ENCODE measurements at regions of chr2 and their contacts with region 1.

Region 1: GRCh38 chr2:176096986-176097819 is 2.4 kb upstream of the HOXD12 start:
- DNase-seq: peak; percentile 42
- ATAC-seq: peak; percentile 68
- H3K4me3 Mint-ChIP-seq: peak overlapping the region; percentile 76
- H3K27ac Mint-ChIP-seq: no peak overlapping the region
- H3K4me1 Mint-ChIP-seq: peaks cover 19% of the 10 kb centered on the region
- H3K27me3 Mint-ChIP-seq: peaks cover 77% of the 10 kb centered on the region
- CTCF ChIP-seq: no peak

Region 2: GRCh38 chr2:175030380-175031271 is 1066.6 kb before region 1 on chr2:
- CTCF ChIA-PET with region 1: no interaction called
- POLR2A ChIA-PET with region 1: no interaction called
- intact Hi-C with region 1: loop called (anchors 10 kb)
- DNase-seq: no peak
- ATAC-seq: no peak
- H3K4me3 Mint-ChIP-seq: no peak overlapping the region
- H3K27ac Mint-ChIP-seq: no peak overlapping the region
- H3K4me1 Mint-ChIP-seq: no peaks in the 10 kb centered on the region
- H3K27me3 Mint-ChIP-seq: no peaks in the 10 kb centered on the region
- CTCF ChIP-seq: no peak

Region 3: GRCh38 chr2:175203621-175204496 is 893.3 kb before region 1 on chr2:
- CTCF ChIA-PET with region 1: interaction called, 3 read pairs
- POLR2A ChIA-PET with region 1: no interaction called
- intact Hi-C with region 1: loop called (anchors 2 kb)
- DNase-seq: no peak
- ATAC-seq: peak; percentile 79
- H3K4me3 Mint-ChIP-seq: no peak overlapping the region
- H3K27ac Mint-ChIP-seq: no peak overlapping the region
- H3K4me1 Mint-ChIP-seq: no peaks in the 10 kb centered on the region
- H3K27me3 Mint-ChIP-seq: peaks cover 25% of the 10 kb centered on the region
- CTCF ChIP-seq: no peak

Region 4: GRCh38 chr2:175251425-175252041 is 845.7 kb before region 1 on chr2:
- CTCF ChIA-PET with region 1: interaction called, 16 read pairs
- POLR2A ChIA-PET with region 1: no interaction called
- intact Hi-C with region 1: no loop called
- DNase-seq: no peak
- ATAC-seq: no peak
- H3K4me3 Mint-ChIP-seq: no peak overlapping the region
- H3K27ac Mint-ChIP-seq: no peak overlapping the region
- H3K4me1 Mint-ChIP-seq: no peaks in the 10 kb centered on the region
- H3K27me3 Mint-ChIP-seq: peaks cover 17% of the 10 kb centered on the region
- CTCF ChIP-seq: peak; percentile 51

Region 5: DNA sequence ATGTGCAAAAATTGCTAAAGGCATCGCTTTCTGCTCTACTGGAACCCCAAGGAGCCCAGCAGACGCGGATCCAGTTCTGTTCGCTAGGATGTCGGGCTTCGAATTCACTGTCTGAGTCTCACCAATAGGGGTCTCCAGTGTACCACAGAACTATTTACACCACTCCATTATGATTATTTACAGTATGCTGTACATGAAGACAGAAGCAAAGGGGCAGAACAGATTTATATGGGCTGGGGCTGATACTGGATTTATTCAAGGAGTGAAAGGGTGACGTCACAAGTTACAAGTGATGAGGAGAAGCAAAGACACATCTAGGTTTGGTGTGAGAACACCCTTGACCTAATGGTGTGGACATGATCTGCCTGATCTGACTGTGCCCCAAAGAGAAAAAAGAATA is 730.4 kb before region 1 on chr2:
- CTCF ChIA-PET with region 1: no interaction called
- POLR2A ChIA-PET with region 1: no interaction called
- intact Hi-C with region 1: loop called (anchors 1 kb)
- DNase-seq: no peak
- ATAC-seq: no peak
- H3K4me3 Mint-ChIP-seq: no peak overlapping the region
- H3K27ac Mint-ChIP-seq: no peak overlapping the region
- H3K4me1 Mint-ChIP-seq: no peaks in the 10 kb centered on the region
- H3K27me3 Mint-ChIP-seq: peaks cover 9% of the 10 kb centered on the region
- CTCF ChIP-seq: peak; percentile 57

Region 6: GRCh38 chr2:175690113-175690837 is 406.9 kb before region 1 on chr2:
- CTCF ChIA-PET with region 1: interaction called, 53 read pairs
- POLR2A ChIA-PET with region 1: no interaction called
- intact Hi-C with region 1: no loop called
- DNase-seq: no peak
- ATAC-seq: no peak
- H3K4me3 Mint-ChIP-seq: no peak overlapping the region
- H3K27ac Mint-ChIP-seq: no peak overlapping the region
- H3K4me1 Mint-ChIP-seq: no peaks in the 10 kb centered on the region
- H3K27me3 Mint-ChIP-seq: peaks cover 1% of the 10 kb centered on the region
- CTCF ChIP-seq: no peak